ENCODE measurements at regions of chr9 and their contacts with region 1.

Region 1: GRCh38 chr9:122159026-122159924 is at the starts of genes MORN5 and NDUFA8:
- DNase-seq: peak; percentile 98 to 99 (median 99)
- ATAC-seq: peak; percentile 96
- H3K4me3 ChIP-seq: peak within 1 kb of the TSS; percentile 93
- H3K27ac ChIP-seq: peak within 1 kb of the TSS; percentile 90
- H3K4me1 ChIP-seq: peaks cover 8 to 11% of the 10 kb centered on the region in 2 experiments; a peak in 4 of 5 replicates
- H3K27me3 ChIP-seq: no peaks in the 10 kb centered on the region; a peak in 1 of 5 replicates
- CTCF ChIP-seq: no peak
- EP300 ChIP-seq: no peak
- POLR2A ChIP-seq: peak; percentile 93
- RAD21 ChIP-seq: no peak
- polyA plus RNA-seq, gene MORN5: not detected
- polyA plus RNA-seq, gene NDUFA8: 126 to 189 TPM

Region 2: DNA sequence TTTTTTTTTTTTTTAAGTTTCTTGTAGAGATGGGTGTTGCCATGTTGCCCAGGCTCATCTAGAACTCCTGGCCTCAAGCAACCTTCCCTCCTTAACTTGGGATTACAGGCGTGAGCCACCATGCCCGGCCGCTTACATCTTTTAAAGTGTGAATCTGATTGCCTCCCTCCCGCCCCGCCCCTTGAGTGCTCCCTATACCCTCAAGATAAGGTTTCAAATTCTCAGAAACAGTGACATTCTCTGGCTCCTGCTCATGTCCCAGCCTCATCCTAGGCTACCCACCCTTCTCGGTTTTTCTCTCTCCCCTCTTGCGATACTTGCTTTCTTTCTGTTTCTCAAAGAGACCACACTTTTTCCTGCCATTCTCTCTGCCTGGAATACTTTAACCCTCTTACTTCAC is 12.9 kb after region 1 on chr9:
- CTCF ChIA-PET with region 1: no interaction called
- POLR2A ChIA-PET with region 1: interaction called, 10 read pairs
- in situ Hi-C with region 1: no loop called
- intact Hi-C with region 1: no loop called
- DNase-seq: peak; percentile 35 to 84 (median 59)
- ATAC-seq: peak; percentile 84
- H3K4me3 ChIP-seq: no peak overlapping the region
- H3K27ac ChIP-seq: no peak overlapping the region
- H3K4me1 ChIP-seq: peaks cover 9 to 17% of the 10 kb centered on the region in 2 experiments; a peak in 3 of 5 replicates
- H3K27me3 ChIP-seq: no peaks in the 10 kb centered on the region
- CTCF ChIP-seq: no peak
- EP300 ChIP-seq: no peak
- POLR2A ChIP-seq: no peak
- RAD21 ChIP-seq: no peak; a peak in 1 of 4 replicates

Region 3: DNA sequence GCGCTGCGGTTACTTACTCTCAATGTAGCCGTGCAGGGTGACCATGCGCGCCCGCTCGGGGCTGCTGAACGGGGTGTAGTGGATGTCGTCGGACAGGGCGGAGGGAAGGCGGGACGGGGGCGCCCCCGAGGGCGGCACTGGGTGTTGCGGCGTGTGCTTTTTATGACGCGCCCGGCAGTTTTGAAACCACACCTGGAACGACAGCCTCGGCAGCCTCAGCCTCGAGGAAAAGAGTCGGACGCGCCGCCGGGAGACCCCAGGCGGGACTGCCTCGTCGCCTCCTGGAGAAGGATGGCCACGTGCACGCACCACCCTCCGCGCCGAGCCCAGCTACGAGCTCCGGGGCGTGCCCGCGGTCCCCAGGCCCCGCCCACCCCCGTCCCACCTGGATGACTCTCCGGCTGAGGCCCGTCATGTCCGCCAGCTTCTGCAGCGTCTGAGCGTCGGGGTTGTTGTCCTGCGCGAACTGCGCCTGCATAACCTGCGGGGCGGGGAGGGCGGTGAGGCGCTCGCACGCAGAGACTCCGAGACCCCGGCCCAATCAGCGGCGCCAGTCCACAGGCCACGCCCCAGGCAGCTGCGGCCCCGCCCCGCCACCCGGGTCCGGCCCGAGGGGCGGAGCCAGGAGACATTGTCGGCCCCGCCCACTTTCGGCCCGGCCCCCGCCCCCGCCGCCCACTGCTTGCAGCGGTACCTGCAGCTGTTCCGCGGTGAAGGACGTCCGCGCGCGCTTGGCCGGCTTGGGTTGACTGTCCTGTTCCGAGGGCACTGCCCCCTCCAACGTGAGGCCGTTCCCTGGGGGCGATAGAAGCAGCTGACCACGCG is 54.5 kb after region 1 on chr9:
- CTCF ChIA-PET with region 1: no interaction called
- POLR2A ChIA-PET with region 1: no interaction called
- in situ Hi-C with region 1: no loop called
- intact Hi-C with region 1: loop called (anchors 5 kb)
- DNase-seq: peak; percentile 96 to 100 (median 99)
- ATAC-seq: peak; percentile 98
- H3K4me3 ChIP-seq: peak overlapping the region; percentile 58
- H3K27ac ChIP-seq: peak overlapping the region; percentile 76
- H3K4me1 ChIP-seq: peaks cover 23 to 31% of the 10 kb centered on the region in 2 experiments; a peak in 4 of 5 replicates
- H3K27me3 ChIP-seq: no peaks in the 10 kb centered on the region
- CTCF ChIP-seq: peak in 2 of 3 experiments; percentile 17 to 27; a peak in 3 of 6 replicates
- EP300 ChIP-seq: no peak
- POLR2A ChIP-seq: no peak; the same call in 1 of the 2 replicates
- RAD21 ChIP-seq: no peak

Region 4: GRCh38 chr9:122307925-122308324 is 148.7 kb after region 1 on chr9:
- CTCF ChIA-PET with region 1: no interaction called
- POLR2A ChIA-PET with region 1: no interaction called
- in situ Hi-C with region 1: no loop called
- intact Hi-C with region 1: no loop called
- DNase-seq: no peak
- ATAC-seq: no peak
- H3K4me3 ChIP-seq: no peak overlapping the region
- H3K27ac ChIP-seq: no peak overlapping the region
- H3K4me1 ChIP-seq: no peaks in the 10 kb centered on the region
- H3K27me3 ChIP-seq: no peaks in the 10 kb centered on the region
- CTCF ChIP-seq: no peak
- EP300 ChIP-seq: no peak
- POLR2A ChIP-seq: no peak
- RAD21 ChIP-seq: no peak